ENCODE measurements at regions of chr10 and their contacts with region 1.

Region 1: GRCh38 chr10:117511601-117512390 is 30.8 kb upstream of the EMX2 start:
- DNase-seq: no peak
- H3K4me3 ChIP-seq: no peak overlapping the region
- H3K27ac ChIP-seq: no peak overlapping the region
- H3K4me1 ChIP-seq: no peaks in the 10 kb centered on the region
- CTCF ChIP-seq: no peak

Region 2: DNA sequence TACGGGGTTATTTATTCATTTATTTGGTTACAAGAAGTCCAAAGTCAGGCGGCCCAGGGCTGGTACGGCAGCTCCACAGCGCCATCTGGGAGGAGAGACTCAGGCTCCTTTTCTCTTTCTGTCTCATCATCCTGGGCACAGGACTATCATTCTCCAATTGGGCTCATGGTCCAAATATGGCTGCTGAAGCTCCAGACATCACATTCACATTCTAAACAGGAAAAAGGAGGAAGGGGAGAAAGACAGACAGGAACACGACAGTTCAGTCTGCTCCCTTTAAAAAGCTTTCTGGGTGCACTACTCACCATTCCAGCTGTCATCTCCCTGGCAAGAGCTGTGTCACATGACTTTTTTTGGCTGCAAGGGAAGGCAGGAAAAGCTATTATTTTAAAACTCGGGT is 62.2 kb before region 1 on chr10:
- CTCF ChIA-PET with region 1: no interaction called
- POLR2A ChIA-PET with region 1: no interaction called
- intact Hi-C with region 1: no loop called
- DNase-seq: no peak
- H3K4me3 ChIP-seq: no peak overlapping the region
- H3K27ac ChIP-seq: no peak overlapping the region
- H3K4me1 ChIP-seq: no peaks in the 10 kb centered on the region
- CTCF ChIP-seq: peak; percentile 27; the same call in 1 of the 2 replicates

Region 3: GRCh38 chr10:117547716-117548668 is 36.2 kb after region 1 on chr10:
- CTCF ChIA-PET with region 1: interaction called, 10 read pairs
- POLR2A ChIA-PET with region 1: no interaction called
- intact Hi-C with region 1: no loop called
- DNase-seq: no peak
- H3K4me3 ChIP-seq: no peak overlapping the region
- H3K27ac ChIP-seq: no peak overlapping the region
- H3K4me1 ChIP-seq: no peaks in the 10 kb centered on the region
- CTCF ChIP-seq: no peak

Region 4: DNA sequence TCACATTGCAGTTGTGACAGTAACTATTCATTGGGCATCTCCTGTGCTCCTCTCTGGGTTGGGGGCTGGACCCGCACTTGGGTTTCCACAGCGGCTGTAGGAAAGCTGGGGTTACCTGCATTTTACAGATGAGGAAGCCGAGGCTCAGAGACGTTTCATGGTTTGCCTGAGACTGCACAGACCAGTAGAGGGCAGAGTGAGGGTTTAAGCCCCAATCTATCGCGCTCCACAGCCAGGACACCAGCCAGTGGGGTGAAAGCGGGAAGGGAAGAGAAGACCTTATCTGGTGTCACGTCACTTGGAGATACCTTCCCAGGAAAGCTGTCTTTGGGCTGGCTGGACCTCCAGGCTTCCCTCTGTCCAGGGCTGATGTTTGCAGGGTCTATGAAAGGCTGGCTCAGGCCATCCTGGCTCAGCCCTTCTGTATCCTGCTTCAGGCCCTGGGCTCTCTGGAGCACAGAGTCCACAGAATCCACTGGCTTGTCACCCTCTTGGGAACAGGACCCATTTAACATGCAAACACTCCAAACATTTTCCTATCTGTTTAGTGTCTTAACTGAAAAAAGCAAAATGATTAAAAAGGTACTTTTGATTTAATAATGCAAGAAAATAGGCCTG is 198.5 kb after region 1 on chr10:
- CTCF ChIA-PET with region 1: no interaction called
- POLR2A ChIA-PET with region 1: no interaction called
- intact Hi-C with region 1: no loop called
- DNase-seq: peak; percentile 2
- H3K4me3 ChIP-seq: no peak overlapping the region
- H3K27ac ChIP-seq: no peak overlapping the region
- H3K4me1 ChIP-seq: no peaks in the 10 kb centered on the region
- CTCF ChIP-seq: peak; percentile 45

Measured in OCI-LY7 (cell line).